ENCODE measurements at regions of chr4 and their contacts with region 1.

Region 1: GRCh38 chr4:67327262-67328017 is 217.9 kb downstream of the CENPC start:
- DNase-seq: peak; percentile 87
- H3K4me3 Mint-ChIP-seq: no peak overlapping the region
- H3K27ac Mint-ChIP-seq: no peak overlapping the region
- H3K4me1 Mint-ChIP-seq: no peaks in the 10 kb centered on the region
- H3K27me3 Mint-ChIP-seq: peaks cover 5% of the 10 kb centered on the region

Region 2: GRCh38 chr4:67087897-67088296 is 239.5 kb before region 1 on chr4:
- intact Hi-C with region 1: loop called (anchors 1 kb)
- DNase-seq: peak; percentile 81
- H3K4me3 Mint-ChIP-seq: no peak overlapping the region
- H3K27ac Mint-ChIP-seq: no peak overlapping the region
- H3K4me1 Mint-ChIP-seq: no peaks in the 10 kb centered on the region
- H3K27me3 Mint-ChIP-seq: peaks cover 2% of the 10 kb centered on the region

Region 3: GRCh38 chr4:67531379-67531962 is 204.0 kb after region 1 on chr4:
- intact Hi-C with region 1: no loop called
- DNase-seq: no peak
- H3K4me3 Mint-ChIP-seq: no peak overlapping the region
- H3K27ac Mint-ChIP-seq: no peak overlapping the region
- H3K4me1 Mint-ChIP-seq: peaks cover 13% of the 10 kb centered on the region
- H3K27me3 Mint-ChIP-seq: no peaks in the 10 kb centered on the region